Transverse colon (tissue), 4 donors: ENCODE measurements at regions of chr7 and their contacts with region 1.

Region 1: DNA sequence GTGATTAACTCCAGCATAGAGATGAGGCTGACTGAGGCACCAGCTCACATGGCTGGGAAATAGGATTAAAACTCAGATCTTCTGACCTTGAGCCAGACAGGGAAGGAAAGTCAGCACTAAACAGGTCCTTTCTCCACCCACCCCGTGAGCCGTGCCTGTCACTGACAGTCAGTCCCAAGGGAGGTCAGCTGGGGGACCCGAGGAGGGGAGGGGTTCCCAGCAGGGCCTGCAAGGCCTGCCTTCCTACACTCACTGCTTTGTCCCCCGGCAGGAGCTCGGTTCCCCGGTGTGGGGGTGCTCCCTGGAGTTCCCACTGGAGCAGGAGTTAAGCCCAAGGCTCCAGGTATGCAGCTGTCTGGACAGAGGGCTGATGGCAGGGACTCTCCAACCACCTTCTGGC is 17.0 kb downstream of the ELN start:
- DNase-seq: no peak
- H3K4me3 ChIP-seq: no peak overlapping the region
- H3K27ac ChIP-seq: no peak overlapping the region
- H3K4me1 ChIP-seq: peaks cover 12 to 17% (median 13%) of the 10 kb centered on the region in 4 donors
- H3K27me3 ChIP-seq: no peaks in the 10 kb centered on the region
- CTCF ChIP-seq: no peak
- EP300 ChIP-seq: no peak
- POLR2A ChIP-seq: no peak

Region 2: GRCh38 chr7:74002474-74003017 is 42.4 kb before region 1 on chr7:
- in situ Hi-C with region 1: no loop called
- intact Hi-C with region 1: loop called (anchors 1 kb)
- DNase-seq: peak; percentile 67
- H3K4me3 ChIP-seq: no peak overlapping the region
- H3K27ac ChIP-seq: peak overlapping the region in 3 of 4 donors; percentile 16 to 36 (median 32)
- H3K4me1 ChIP-seq: peaks cover 3 to 40% (median 32%) of the 10 kb centered on the region in 4 donors
- H3K27me3 ChIP-seq: no peaks in the 10 kb centered on the region
- CTCF ChIP-seq: no peak
- EP300 ChIP-seq: no peak
- POLR2A ChIP-seq: no peak